Ovary (tissue), 10 donors: ENCODE measurements at regions of chr1 and their contacts with region 1.

Region 1: DNA sequence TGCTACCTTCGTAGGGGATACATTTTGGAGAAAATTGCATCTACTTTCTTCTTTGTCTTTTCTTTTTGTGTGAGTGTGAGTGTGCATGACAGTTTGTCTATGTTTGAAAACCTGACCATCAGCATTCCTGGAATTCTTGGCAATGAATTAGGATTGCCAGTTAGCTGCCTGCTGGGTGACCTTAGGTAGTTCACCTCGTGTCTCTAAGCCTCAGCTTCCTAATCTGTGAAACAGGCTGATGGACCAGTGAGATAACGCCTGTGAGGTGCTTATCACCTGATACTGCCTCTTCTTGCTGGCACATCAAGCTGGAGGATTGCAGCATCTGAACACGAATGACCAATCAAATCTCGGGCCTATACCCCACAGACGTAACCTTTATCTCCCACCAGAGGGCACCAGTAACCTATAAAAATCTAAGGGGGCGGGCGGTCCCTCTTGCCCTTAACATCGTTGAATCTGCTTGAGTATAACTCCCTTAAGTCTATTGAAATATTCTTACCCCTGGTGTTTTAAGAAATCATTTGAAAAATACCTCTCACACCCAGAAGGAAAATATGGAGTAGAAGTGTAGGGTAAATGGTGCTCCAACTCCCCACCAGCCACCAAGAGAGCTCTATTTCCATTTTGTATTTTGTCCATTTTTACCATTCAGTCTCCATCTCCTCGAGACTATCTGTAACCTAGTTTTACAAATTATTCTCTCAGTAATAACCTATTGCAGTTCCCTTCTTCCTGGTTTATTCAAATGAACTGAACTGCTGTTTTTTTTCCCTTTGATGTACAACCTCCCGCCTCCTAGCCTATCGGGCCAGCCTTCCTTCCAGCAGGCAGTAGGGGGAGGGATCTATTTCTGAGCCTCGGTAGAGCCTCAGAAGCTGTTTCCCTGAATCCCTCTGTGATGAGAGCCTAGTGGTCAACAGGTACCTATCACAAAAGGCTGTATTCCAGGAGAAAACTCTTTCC is 49.7 kb downstream of the MDM4 start:
- DNase-seq: peak in 3 of 5 donors; percentile 32 to 53 (median 44)
- H3K4me3 ChIP-seq: no peak overlapping the region
- H3K27ac ChIP-seq: no peak overlapping the region
- H3K4me1 ChIP-seq: no peaks in the 10 kb centered on the region
- H3K27me3 ChIP-seq: no peaks in the 10 kb centered on the region
- CTCF ChIP-seq: peak; percentile 15 to 72 (median 56)
- EP300 ChIP-seq: no peak
- POLR2A ChIP-seq: no peak

Region 2: DNA sequence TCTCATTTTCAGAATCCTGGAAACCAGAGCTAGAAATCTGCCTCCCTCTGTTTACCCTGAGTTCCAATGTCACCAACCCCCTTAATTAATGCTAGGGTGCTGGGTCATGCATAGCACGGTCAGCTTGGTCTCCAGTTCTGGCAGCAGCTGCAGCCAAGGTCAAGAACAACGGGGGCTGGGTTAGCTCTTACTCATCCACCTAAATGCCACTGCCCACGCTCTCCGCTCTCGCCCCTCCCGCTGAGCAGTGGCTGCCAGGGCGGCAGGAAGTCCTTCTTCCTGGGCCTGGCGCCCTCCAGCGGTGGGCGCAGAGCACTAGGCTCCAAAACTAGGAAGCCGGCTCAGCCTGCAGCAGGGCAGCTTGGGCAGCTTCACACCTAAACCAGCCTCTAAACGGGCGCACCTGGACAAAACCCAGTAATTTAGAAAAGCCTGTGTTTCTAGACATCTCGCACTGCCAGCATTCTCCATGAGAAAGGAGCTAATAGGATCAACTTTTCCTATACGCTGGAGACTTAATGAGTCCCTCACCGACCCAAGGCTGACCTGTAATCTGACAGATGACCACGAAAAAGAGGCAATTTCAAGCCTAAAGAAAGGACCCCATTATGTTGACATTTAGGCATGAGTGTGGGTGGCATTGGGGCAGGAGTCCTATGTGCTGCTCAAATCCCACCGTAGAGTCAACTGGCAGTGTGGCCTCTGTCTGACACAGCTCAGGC is 198.0 kb after region 1 on chr1:
- intact Hi-C with region 1: loop called in 1 of 4 experiments (anchors 10 kb)
- DNase-seq: peak; percentile 49 to 84 (median 74)
- H3K4me3 ChIP-seq: no peak overlapping the region
- H3K27ac ChIP-seq: no peak overlapping the region
- H3K4me1 ChIP-seq: peaks cover 3% of the 10 kb centered on the region
- H3K27me3 ChIP-seq: no peaks in the 10 kb centered on the region
- CTCF ChIP-seq: peak; percentile 29 to 43 (median 41)
- EP300 ChIP-seq: no peak
- POLR2A ChIP-seq: no peak